HCT116 (cell line): ENCODE measurements at regions of chr20 and their contacts with region 1.

Region 1: GRCh38 chr20:54199721-54200176 is 8.1 kb upstream of the PFDN4 start:
- DNase-seq: peak; percentile 71
- ATAC-seq: peak; percentile 60
- H3K4me3 ChIP-seq: no peak overlapping the region
- H3K27ac ChIP-seq: no peak overlapping the region; the same call in 1 of the 2 replicates
- H3K4me1 ChIP-seq: peaks cover 39 to 52% of the 10 kb centered on the region in 2 experiments
- H3K27me3 ChIP-seq: no peaks in the 10 kb centered on the region
- CTCF ChIP-seq: peak; percentile 77 to 95 (median 93)
- POLR2A ChIP-seq: no peak
- RAD21 ChIP-seq: peak; percentile 94

Region 2: DNA sequence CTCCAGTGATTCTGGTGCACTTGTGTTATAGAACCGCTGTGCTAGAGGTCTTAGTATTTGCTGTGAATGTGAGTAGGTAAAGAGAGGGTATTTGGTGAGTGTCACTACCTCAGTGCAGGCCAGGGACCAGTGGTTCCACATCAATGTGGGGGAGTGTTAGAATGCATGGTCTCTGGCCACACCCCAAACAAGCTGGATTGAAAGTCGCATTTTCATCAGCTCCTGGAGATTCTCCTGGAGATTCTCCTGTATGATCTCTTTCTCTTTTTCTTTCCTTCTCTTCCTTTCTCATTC is 102.6 kb before region 1 on chr20:
- CTCF ChIA-PET with region 1: interaction called, 162 read pairs
- POLR2A ChIA-PET with region 1: interaction called, 3 read pairs
- RAD21 ChIA-PET with region 1: interaction called, 15 to 17 read pairs
- intact Hi-C with region 1: loop called (anchors 1 kb)
- DNase-seq: no peak
- ATAC-seq: peak; percentile 58; the same call in 1 of the 2 replicates
- H3K4me3 ChIP-seq: no peak overlapping the region
- H3K27ac ChIP-seq: peak overlapping the region; percentile 29
- H3K4me1 ChIP-seq: peaks cover 8 to 24% of the 10 kb centered on the region in 2 experiments; a peak in 3 of 4 replicates
- H3K27me3 ChIP-seq: no peaks in the 10 kb centered on the region
- CTCF ChIP-seq: no peak
- POLR2A ChIP-seq: no peak
- RAD21 ChIP-seq: no peak